ENCODE measurements at regions of chr14 and their contacts with region 1.

Region 1: GRCh38 chr14:92577321-92577742 is 63.8 kb downstream of the RIN3 start:
- DNase-seq: peak; percentile 53
- H3K4me3 Mint-ChIP-seq: peak overlapping the region; percentile 33
- H3K27ac Mint-ChIP-seq: peak overlapping the region; percentile 71
- H3K4me1 Mint-ChIP-seq: peaks cover 43% of the 10 kb centered on the region
- H3K27me3 Mint-ChIP-seq: peaks cover 26% of the 10 kb centered on the region

Region 2: DNA sequence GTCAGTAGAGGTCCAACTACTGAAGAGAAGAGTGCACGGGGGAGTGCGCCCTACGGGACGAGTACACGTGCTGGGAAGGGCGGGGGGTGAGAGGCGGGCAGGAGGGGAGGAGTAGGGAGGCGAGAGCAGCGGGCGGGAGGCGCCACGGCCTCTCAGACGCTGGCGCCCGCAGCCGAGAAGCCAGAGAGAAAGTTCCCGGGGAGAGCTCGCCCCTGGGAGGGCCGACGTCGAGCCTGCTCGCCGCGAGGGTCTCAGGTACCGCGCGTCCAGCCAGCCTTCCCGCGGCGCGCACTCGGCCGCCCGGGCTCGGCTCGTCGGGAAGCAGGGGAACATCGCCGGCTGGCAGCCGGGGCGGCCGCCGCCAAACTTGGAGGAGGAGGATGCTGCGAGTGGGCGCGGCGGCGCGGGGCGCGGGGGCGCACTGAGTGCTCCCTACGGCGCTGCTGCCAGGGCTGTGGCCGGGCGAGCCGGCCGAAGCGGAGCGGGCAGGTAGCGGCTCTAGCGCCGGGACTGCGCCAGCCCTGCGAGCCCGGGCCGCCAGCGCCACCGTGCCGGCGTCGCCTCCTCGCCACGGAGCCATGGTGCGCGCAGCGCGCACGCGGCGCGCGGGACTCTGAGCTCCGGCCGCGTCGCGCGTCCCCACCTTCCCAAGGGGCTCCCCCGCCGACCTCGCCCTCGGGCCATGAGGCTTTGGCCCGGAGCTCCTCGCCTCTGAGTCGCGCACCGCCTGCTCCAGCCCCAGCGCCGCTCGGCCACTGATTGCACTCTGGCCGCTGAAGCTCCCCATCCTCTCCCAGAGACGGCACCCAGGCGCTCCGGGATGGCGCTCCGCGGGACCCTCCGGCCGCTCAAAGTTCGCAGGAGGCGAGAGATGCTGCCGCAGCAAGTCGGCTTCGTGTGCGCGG is 254.1 kb before region 1 on chr14 and contains the start of gene SLC24A4:
- CTCF ChIA-PET with region 1: no interaction called
- POLR2A ChIA-PET with region 1: no interaction called
- DNase-seq: no peak
- H3K4me3 Mint-ChIP-seq: peak within 1 kb of the TSS; percentile 32
- H3K27ac Mint-ChIP-seq: no peak within 1 kb of the TSS
- H3K4me1 Mint-ChIP-seq: no peaks in the 10 kb centered on the region
- H3K27me3 Mint-ChIP-seq: peaks cover 70% of the 10 kb centered on the region
- total RNA-seq, gene SLC24A4: not detected

Region 3: GRCh38 chr14:92563359-92563758 is 14.0 kb before region 1 on chr14:
- CTCF ChIA-PET with region 1: interaction called, 7 read pairs
- POLR2A ChIA-PET with region 1: interaction called, 14 read pairs
- DNase-seq: peak; percentile 43
- H3K4me3 Mint-ChIP-seq: no peak overlapping the region
- H3K27ac Mint-ChIP-seq: peak overlapping the region; percentile 44
- H3K4me1 Mint-ChIP-seq: peaks cover 56% of the 10 kb centered on the region
- H3K27me3 Mint-ChIP-seq: peaks cover 6% of the 10 kb centered on the region

Measured in activated CD4-positive, alpha-beta memory T cell treated with anti-CD3 and anti-CD28 coated beads, Interleukin-2, amount 10 ng/mL, durations not matched to agents 7 days and 5 days (primary cell).